T-cell (primary cell): ENCODE measurements at regions of chr13 and their contacts with region 1.

Region 1: DNA sequence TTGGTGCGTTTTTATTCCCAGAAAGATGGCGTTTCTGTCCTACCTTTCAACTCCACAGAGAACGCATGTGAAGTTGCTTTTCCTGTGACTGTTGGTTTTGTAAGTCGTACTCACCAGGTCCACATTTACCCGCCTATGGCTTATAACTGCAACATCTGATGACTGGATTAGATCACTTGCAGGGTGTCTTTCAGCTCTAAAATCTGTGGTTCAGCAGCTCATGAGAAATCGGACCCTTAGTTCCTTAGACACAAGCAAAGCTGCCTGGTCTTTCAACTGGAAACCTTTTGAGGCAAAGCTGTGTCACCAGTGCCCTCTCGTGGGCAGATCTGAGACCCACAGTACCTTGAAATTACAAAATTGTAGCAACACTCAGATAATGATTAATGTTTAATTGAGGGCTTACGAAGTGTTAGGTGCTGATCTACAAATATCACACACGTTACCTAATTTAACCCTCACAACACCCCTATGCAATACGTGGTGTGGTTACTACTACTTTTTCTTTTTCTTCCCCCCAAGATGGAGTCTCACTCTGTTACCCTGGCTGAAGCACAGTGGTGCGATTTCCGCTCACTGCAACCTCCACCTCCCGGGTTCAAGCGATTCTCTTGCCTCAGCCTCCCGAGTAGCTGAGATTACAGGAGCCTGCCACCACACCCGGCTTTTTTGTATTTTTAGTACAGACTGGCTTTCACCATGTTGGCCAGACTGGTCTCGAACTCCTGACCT is 65.4 kb downstream of the RUBCNL start:
- DNase-seq: peak; percentile 49 to 87 (median 70)
- ATAC-seq: peak; percentile 85 to 92 (median 88)
- H3K4me3 ChIP-seq: peak overlapping the region; percentile 42 to 43
- H3K4me3 Mint-ChIP-seq: peak overlapping the region; percentile 76 to 82 (median 79)
- H3K27ac ChIP-seq: peak overlapping the region; percentile 69
- H3K27ac Mint-ChIP-seq: peak overlapping the region; percentile 95 to 96
- H3K4me1 ChIP-seq: peaks cover 14 to 15% of the 10 kb centered on the region in 2 experiments
- H3K4me1 Mint-ChIP-seq: peaks cover 33 to 46% (median 36%) of the 10 kb centered on the region in 3 donors
- H3K27me3 ChIP-seq: no peaks in the 10 kb centered on the region
- H3K27me3 Mint-ChIP-seq: peaks cover 0 to 6% of the 10 kb centered on the region in 2 donors

Region 2: GRCh38 chr13:46168341-46168740 is 153.3 kb before region 1 on chr13:
- CTCF ChIA-PET with region 1: interaction called in 1 of 2 experiments, 10 read pairs
- POLR2A ChIA-PET with region 1: interaction called in 1 of 2 experiments, 11 read pairs
- DNase-seq: peak in 17 of 35 experiments; percentile 24 to 80 (median 35)
- ATAC-seq: peak in 3 of 4 experiments; percentile 5 to 58 (median 11)
- H3K4me3 ChIP-seq: peak overlapping the region; percentile 11 to 24
- H3K4me3 Mint-ChIP-seq: peak overlapping the region; percentile 59 to 90 (median 64)
- H3K27ac ChIP-seq: peak overlapping the region; percentile 83
- H3K27ac Mint-ChIP-seq: peak overlapping the region; percentile 85 to 93
- H3K4me1 ChIP-seq: peaks cover 76 to 79% of the 10 kb centered on the region in 2 experiments
- H3K4me1 Mint-ChIP-seq: peaks cover 94 to 96% (median 95%) of the 10 kb centered on the region in 3 donors
- H3K27me3 ChIP-seq: no peaks in the 10 kb centered on the region
- H3K27me3 Mint-ChIP-seq: no peaks in the 10 kb centered on the region

Region 3: GRCh38 chr13:46176756-46177155 is 144.9 kb before region 1 on chr13:
- CTCF ChIA-PET with region 1: interaction called, 5 to 10 read pairs
- POLR2A ChIA-PET with region 1: no interaction called
- DNase-seq: peak in 1 of 35 experiments; percentile 23
- ATAC-seq: no peak
- H3K4me3 ChIP-seq: peak overlapping the region; percentile 30 to 42
- H3K4me3 Mint-ChIP-seq: peak overlapping the region; percentile 90 to 99 (median 94)
- H3K27ac ChIP-seq: peak overlapping the region; percentile 83
- H3K27ac Mint-ChIP-seq: peak overlapping the region; percentile 85 to 93
- H3K4me1 ChIP-seq: peaks cover 40 to 75% of the 10 kb centered on the region in 2 experiments
- H3K4me1 Mint-ChIP-seq: peaks cover 75 to 89% (median 81%) of the 10 kb centered on the region in 3 donors
- H3K27me3 ChIP-seq: no peaks in the 10 kb centered on the region
- H3K27me3 Mint-ChIP-seq: no peaks in the 10 kb centered on the region

Region 4: DNA sequence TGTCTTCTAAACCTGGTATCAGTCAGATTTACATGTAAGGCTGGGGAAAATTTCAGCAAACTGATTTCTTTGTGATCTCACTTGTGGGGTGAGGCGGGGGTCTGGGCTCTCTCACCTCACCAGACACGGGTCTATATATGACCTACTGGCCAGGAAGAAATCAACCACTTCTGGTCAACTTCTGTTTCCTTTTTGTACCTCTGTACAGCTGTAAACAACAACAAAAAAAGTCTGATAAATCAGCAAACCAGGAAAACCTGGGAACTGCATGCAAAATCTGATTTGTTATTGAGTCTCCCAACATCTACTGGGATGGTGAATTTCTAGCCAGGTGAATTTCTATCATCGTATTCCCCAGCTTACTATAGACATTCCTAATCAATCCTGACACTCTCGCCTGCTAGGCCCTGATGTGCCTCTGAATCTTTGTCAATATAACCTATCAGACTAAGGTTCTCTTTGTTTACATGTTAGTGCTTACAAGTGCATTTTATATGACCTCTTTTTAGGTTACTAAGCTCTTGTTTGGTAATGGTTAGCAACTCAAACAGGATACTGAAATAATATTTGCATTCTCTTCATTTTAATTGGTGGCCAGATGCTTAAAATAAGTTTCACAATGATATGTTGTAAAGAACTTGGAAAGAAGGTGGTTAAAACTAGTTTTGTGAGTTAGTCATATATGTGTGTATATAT is 32.3 kb before region 1 on chr13:
- CTCF ChIA-PET with region 1: interaction called, 13 to 15 read pairs
- POLR2A ChIA-PET with region 1: no interaction called
- DNase-seq: no peak
- ATAC-seq: no peak
- H3K4me3 ChIP-seq: no peak overlapping the region
- H3K4me3 Mint-ChIP-seq: no peak overlapping the region
- H3K27ac ChIP-seq: no peak overlapping the region
- H3K27ac Mint-ChIP-seq: no peak overlapping the region
- H3K4me1 ChIP-seq: peaks cover 7% of the 10 kb centered on the region in 2 experiments
- H3K4me1 Mint-ChIP-seq: peaks cover 21 to 25% (median 23%) of the 10 kb centered on the region in 3 donors
- H3K27me3 ChIP-seq: no peaks in the 10 kb centered on the region
- H3K27me3 Mint-ChIP-seq: no peaks in the 10 kb centered on the region

Region 5: GRCh38 chr13:46295491-46296114 is 26.1 kb before region 1 on chr13:
- CTCF ChIA-PET with region 1: interaction called, 15 to 32 read pairs
- POLR2A ChIA-PET with region 1: interaction called in 1 of 2 experiments, 7 read pairs
- DNase-seq: peak; percentile 31 to 92 (median 79)
- ATAC-seq: peak; percentile 90 to 91 (median 90)
- H3K4me3 ChIP-seq: peak overlapping the region; percentile 6 to 11
- H3K4me3 Mint-ChIP-seq: peak overlapping the region; percentile 50 to 68 (median 61)
- H3K27ac ChIP-seq: peak overlapping the region; percentile 86
- H3K27ac Mint-ChIP-seq: peak overlapping the region; percentile 96 to 99
- H3K4me1 ChIP-seq: peaks cover 36 to 40% of the 10 kb centered on the region in 2 experiments
- H3K4me1 Mint-ChIP-seq: peaks cover 61 to 66% (median 61%) of the 10 kb centered on the region in 3 donors
- H3K27me3 ChIP-seq: no peaks in the 10 kb centered on the region
- H3K27me3 Mint-ChIP-seq: no peaks in the 10 kb centered on the region